ENCODE measurements at regions of chr13 and their contacts with region 1.

Region 1: GRCh38 chr13:29508130-29508875 is 87.2 kb downstream of the SLC7A1 start:
- DNase-seq: peak; percentile 74
- H3K4me3 Mint-ChIP-seq: no peak overlapping the region
- H3K27ac Mint-ChIP-seq: no peak overlapping the region
- H3K4me1 Mint-ChIP-seq: no peaks in the 10 kb centered on the region
- H3K27me3 Mint-ChIP-seq: no peaks in the 10 kb centered on the region
- CTCF ChIP-seq: peak; percentile 86

Region 2: GRCh38 chr13:29496240-29496712 is 12.0 kb before region 1 on chr13:
- CTCF ChIA-PET with region 1: interaction called, 48 read pairs
- POLR2A ChIA-PET with region 1: no interaction called
- intact Hi-C with region 1: no loop called
- DNase-seq: peak; percentile 75
- H3K4me3 Mint-ChIP-seq: peak overlapping the region; percentile 20
- H3K27ac Mint-ChIP-seq: no peak overlapping the region
- H3K4me1 Mint-ChIP-seq: peaks cover 9% of the 10 kb centered on the region
- H3K27me3 Mint-ChIP-seq: peaks cover 15% of the 10 kb centered on the region
- CTCF ChIP-seq: no peak

Region 3: GRCh38 chr13:29595380-29596063 is 87.2 kb after region 1 on chr13 and contains the start of gene SLC7A1:
- CTCF ChIA-PET with region 1: interaction called, 10 read pairs
- POLR2A ChIA-PET with region 1: interaction called, 4 read pairs
- intact Hi-C with region 1: no loop called
- DNase-seq: peak; percentile 83
- H3K4me3 Mint-ChIP-seq: peak within 1 kb of the TSS; percentile 86
- H3K27ac Mint-ChIP-seq: peak within 1 kb of the TSS; percentile 94
- H3K4me1 Mint-ChIP-seq: peaks cover 32% of the 10 kb centered on the region
- H3K27me3 Mint-ChIP-seq: no peaks in the 10 kb centered on the region
- CTCF ChIP-seq: no peak
- total RNA-seq, gene SLC7A1: 154 and 194 TPM in 2 replicates

Region 4: DNA sequence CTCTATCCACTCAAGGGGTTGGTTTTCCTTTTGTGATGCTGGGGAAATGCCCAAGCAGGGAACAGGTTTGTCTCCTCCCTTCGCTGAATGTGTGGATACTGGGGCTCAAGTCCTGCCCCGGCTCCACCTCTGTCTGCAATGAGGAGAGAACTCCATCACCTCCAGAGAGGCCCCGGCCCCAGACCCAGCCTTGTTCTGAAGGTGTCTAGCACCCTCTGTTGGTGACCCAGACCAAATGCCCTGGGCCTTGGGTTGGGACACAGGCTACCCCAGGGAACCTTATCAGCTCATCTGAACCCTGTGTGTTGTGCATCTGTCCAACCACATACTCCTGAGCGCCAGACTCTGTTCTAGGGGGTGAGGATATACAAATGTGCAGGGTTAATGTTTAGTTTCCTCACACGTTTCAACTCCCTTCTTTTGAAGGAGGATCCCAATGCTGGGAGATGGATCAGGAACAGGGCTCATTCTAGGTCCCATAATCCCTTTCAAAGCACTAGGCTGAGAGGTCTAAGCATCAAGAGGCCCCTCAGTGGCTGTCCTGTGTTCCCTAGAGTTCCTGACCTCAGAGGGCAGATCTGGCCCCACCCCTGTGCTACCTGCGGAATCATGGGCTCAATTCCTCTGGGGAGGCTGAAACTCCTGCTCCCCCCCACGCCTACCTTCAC is 199.7 kb after region 1 on chr13:
- CTCF ChIA-PET with region 1: interaction called, 127 read pairs
- POLR2A ChIA-PET with region 1: interaction called, 8 read pairs
- intact Hi-C with region 1: loop called (anchors 1 kb)
- DNase-seq: peak; percentile 62
- H3K4me3 Mint-ChIP-seq: no peak overlapping the region
- H3K27ac Mint-ChIP-seq: no peak overlapping the region
- H3K4me1 Mint-ChIP-seq: peaks cover 6% of the 10 kb centered on the region
- H3K27me3 Mint-ChIP-seq: peaks cover 41% of the 10 kb centered on the region
- CTCF ChIP-seq: peak; percentile 78

Region 5: DNA sequence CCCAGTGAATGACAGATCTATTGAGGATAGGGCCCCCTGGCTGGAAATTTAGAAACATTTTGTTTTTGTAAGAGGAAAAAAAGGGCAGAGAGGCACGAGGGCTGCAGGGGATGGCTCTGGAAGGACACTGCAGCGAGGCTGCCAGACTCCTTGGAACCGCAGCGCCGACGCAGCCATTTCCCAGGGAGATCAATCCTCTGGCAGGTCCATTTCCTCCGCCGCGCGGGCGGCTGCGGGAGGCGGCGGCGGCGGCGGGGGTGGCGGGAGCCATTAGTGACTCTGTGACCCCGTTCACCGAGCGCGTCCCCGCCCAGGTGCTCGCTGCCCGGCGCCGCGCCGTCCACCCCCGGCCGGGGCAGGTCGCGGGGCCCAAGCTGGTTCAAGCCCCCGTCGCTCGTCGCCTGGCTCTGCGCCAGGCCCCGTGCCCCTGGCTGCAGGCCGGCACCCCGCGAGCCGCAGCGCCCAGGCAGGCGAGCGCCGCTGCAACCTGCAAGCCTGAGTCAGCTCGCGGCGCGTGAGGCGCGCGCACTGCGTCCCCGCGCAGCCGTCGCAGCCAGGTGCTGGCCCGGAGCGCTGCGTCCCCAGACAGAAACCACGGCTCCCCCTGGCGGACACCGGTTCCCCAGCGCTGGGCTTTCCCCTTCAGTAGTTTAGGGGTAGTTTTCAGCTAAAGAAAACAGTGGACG is 606.4 kb after region 1 on chr13:
- CTCF ChIA-PET with region 1: interaction called, 8 read pairs
- POLR2A ChIA-PET with region 1: interaction called, 5 read pairs
- intact Hi-C with region 1: loop called (anchors 1 kb)
- DNase-seq: peak; percentile 83
- H3K4me3 Mint-ChIP-seq: peak overlapping the region; percentile 72
- H3K27ac Mint-ChIP-seq: no peak overlapping the region
- H3K4me1 Mint-ChIP-seq: peaks cover 24% of the 10 kb centered on the region
- H3K27me3 Mint-ChIP-seq: no peaks in the 10 kb centered on the region
- CTCF ChIP-seq: peak; percentile 90

Region 6: DNA sequence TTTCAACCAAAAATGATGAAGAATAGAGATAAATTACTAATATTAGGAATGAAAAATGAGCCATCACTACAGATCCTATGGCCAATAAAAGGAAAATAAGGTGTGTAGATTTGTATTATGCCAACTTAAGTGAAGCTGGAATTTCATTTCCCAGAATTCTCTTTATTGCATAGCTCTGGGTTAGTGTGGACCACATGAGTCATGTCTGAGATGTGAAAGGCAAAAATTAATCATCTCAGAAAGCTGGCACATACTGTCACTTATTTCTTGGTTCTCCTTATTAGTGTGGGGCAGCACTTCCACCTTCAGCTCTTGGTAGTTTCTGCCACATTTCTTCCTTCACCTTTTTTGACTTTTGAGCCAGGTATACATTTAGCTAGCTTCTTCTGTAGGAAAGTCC is 716.4 kb after region 1 on chr13:
- CTCF ChIA-PET with region 1: no interaction called
- POLR2A ChIA-PET with region 1: no interaction called
- intact Hi-C with region 1: no loop called
- DNase-seq: peak; percentile 67
- H3K4me3 Mint-ChIP-seq: no peak overlapping the region
- H3K27ac Mint-ChIP-seq: peak overlapping the region; percentile 74
- H3K4me1 Mint-ChIP-seq: peaks cover 12% of the 10 kb centered on the region
- H3K27me3 Mint-ChIP-seq: no peaks in the 10 kb centered on the region
- CTCF ChIP-seq: no peak

Measured in MCF 10A (cell line).